ENCODE measurements at regions of chr14 and their contacts with region 1.

Region 1: DNA sequence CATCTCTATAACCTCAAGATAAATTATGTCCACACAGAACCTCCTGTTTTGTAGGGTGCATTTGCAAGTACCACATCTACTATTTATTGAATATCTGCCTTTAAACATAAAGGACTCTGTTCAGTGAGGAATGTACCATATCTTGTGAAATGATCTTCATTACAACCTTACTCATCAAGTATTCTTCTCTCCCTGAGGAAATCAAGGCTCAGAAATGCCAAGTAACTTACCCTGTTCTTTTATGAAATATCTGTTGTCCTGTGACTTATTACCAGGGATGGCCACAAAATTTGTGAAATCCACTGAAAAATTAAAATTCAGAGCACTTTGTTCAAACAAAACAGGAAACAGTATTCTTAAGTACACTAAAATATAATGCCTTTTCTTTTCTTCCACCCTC is 366.7 kb downstream of the GALC start:
- DNase-seq: no peak
- H3K4me3 ChIP-seq: no peak overlapping the region
- H3K27me3 ChIP-seq: no peaks in the 10 kb centered on the region
- CTCF ChIP-seq: no peak

Region 2: DNA sequence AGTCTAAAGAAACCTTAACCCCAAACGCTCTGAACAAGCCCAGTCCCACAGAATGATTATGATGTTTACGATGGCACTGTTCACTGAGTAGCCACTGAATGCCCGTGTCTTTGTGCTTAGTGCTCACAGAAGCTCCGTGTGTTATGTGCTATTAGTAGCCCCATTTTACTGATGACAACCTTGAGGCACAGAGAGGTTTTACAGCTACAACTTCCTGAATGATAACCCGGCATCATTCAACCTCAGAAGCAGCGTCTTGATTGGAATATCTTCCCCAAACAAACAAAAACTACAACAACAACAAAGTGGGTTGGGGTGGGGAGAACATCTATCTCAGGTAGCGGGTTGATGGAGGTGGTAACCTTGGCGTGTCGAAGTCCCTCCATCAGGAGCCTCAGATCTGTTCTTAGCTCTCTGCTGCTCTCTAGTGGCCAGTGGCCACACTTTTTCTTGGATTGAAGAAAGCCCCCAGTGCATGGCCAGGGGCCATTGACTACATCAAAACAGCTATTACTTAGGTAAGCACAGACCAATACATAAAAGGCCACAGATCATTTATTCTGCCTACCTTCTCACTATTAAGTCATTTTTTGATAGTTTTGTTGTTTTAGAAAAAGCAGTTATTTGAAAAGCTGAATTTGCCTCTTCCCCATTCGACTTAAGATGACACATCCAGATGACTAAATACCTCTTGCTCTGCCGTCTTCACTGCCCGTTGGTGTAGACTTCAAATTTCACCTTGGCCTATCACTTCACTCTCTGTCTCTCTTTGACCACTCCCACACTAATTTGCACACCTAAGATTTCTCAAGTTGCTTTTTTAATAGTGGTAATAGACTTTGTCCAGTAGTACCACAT is 10.2 kb before region 1 on chr14:
- CTCF ChIA-PET with region 1: interaction called, 12 read pairs
- POLR2A ChIA-PET with region 1: no interaction called
- DNase-seq: no peak
- H3K4me3 ChIP-seq: no peak overlapping the region
- H3K27me3 ChIP-seq: no peaks in the 10 kb centered on the region
- CTCF ChIP-seq: peak; percentile 68

Measured in BJ (cell line).